ENCODE measurements at regions of chr11 and their contacts with region 1.

Region 1: DNA sequence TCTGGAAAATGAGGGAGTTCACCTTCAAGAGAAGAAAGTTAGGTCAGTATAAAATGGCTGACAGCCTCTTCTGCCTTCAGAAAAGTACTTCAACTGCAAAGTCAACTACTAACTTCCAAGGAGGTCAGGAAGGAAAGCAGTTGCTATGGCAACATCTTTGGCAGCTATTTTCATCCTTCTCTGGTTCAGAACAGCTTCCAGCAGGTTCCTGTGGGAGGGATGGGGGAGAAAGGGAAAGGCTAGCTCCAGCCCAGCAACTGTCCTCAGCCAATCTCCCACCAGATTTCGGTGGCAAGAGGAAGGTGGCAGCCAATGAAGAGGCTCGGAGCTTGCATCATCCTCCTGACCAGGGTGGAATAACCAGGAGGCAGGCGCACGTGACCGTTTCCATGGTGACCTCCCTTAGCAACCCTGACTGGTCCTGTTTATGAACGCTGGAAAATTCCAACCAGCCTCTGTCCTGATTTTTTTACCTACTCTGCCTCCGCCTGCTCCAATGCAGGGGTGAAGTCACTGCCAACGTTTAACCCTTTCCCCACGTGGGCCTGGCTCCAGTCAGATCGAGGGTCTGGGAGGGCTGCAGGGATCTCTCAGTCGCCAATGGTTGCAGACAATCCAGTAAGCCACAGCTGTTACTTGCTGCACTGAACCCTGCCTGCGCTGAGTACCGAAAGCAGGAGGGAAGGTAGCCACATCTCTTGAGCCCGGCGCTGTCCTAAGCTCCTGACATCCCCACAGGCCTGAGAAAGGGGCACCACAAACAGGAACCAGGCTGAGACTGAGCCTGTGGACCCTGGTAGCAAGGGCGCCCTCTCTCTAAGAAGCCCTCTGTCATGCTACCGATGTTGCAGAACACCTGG is 11.2 kb upstream of the MALAT1 start:
- DNase-seq: peak; percentile 100
- ATAC-seq: peak; percentile 78
- H3K4me3 ChIP-seq: no peak overlapping the region
- H3K27ac ChIP-seq: peak overlapping the region; percentile 85
- H3K4me1 ChIP-seq: peaks cover 51% of the 10 kb centered on the region
- H3K27me3 ChIP-seq: no peaks in the 10 kb centered on the region
- CTCF ChIP-seq: no peak
- POLR2A ChIP-seq: peak; percentile 58; the same call in 1 of the 2 replicates
- RAD21 ChIP-seq: 0 out of 2 replicates have a peak, but pooled peaks have one; percentile 13

Region 2: GRCh38 chr11:65448418-65449105 is 39.1 kb before region 1 on chr11:
- CTCF ChIA-PET with region 1: no interaction called
- POLR2A ChIA-PET with region 1: interaction called, 10 read pairs
- dilution Hi-C with region 1: no loop called
- in situ Hi-C with region 1: no loop called
- intact Hi-C with region 1: no loop called
- DNase-seq: peak; percentile 64
- ATAC-seq: peak; percentile 4
- H3K4me3 ChIP-seq: no peak overlapping the region
- H3K27ac ChIP-seq: no peak overlapping the region; the same call in 1 of the 2 replicates
- H3K4me1 ChIP-seq: peaks cover 7% of the 10 kb centered on the region; the same call in 1 of the 2 replicates
- H3K27me3 ChIP-seq: no peaks in the 10 kb centered on the region
- CTCF ChIP-seq: no peak
- POLR2A ChIP-seq: peak; percentile 33; the same call in 1 of the 2 replicates
- RAD21 ChIP-seq: no peak

Region 3: GRCh38 chr11:65477149-65477965 is 10.3 kb before region 1 on chr11:
- CTCF ChIA-PET with region 1: interaction called, 11 read pairs
- POLR2A ChIA-PET with region 1: interaction called, 33 read pairs
- dilution Hi-C with region 1: no loop called
- in situ Hi-C with region 1: no loop called
- intact Hi-C with region 1: loop called (anchors 1 kb)
- DNase-seq: peak; percentile 92
- ATAC-seq: peak; percentile 72
- H3K4me3 ChIP-seq: peak overlapping the region; percentile 73
- H3K27ac ChIP-seq: peak overlapping the region; percentile 100
- H3K4me1 ChIP-seq: peaks cover 22% of the 10 kb centered on the region
- H3K27me3 ChIP-seq: no peaks in the 10 kb centered on the region
- CTCF ChIP-seq: no peak
- POLR2A ChIP-seq: peak; percentile 83
- RAD21 ChIP-seq: no peak; the same call in 1 of the 2 replicates

Region 4: DNA sequence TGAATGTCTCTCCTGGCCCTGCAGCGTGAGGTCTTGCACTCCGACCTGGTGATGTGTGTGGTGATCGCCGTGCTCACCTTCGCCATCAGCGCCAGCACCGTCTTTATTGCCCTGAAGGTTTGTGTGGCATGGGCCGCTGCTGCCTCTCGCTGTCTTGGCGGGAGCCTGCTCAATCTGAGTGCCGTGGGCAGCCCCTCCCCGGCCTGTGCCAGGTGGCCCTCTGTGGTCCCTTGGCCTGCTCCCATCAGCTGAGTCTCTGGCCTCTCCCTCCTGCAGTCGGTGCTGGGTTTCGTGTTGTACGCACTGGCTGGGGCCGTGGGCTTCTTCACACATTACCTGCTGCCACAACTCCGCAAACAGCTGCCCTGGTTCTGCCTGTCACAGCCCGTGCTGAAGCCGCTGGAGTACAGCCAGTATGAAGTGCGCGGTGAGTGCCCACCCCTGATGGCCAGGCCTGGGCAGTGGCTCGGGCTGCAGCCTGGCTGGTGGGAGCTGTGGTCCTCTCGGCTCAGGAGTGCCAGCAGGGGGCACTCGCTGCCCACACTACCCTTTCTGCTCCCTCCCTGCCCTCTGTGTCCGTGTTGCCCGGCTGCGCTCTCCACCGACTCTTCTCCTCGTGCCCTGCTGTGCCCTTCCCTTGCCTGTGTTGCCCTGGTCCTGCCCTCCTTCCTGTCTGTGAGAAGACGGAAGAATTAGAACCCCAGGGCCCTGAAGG is 138.1 kb after region 1 on chr11:
- CTCF ChIA-PET with region 1: no interaction called
- POLR2A ChIA-PET with region 1: no interaction called
- dilution Hi-C with region 1: no loop called
- in situ Hi-C with region 1: no loop called
- intact Hi-C with region 1: no loop called
- DNase-seq: no peak
- ATAC-seq: peak; percentile 79
- H3K4me3 ChIP-seq: no peak overlapping the region
- H3K27ac ChIP-seq: no peak overlapping the region
- H3K4me1 ChIP-seq: no peaks in the 10 kb centered on the region
- H3K27me3 ChIP-seq: no peaks in the 10 kb centered on the region
- CTCF ChIP-seq: peak; percentile 49
- POLR2A ChIP-seq: no peak
- RAD21 ChIP-seq: peak; percentile 57

Measured in IMR-90 (cell line).